Ovary (tissue), 10 donors: ENCODE measurements at regions of chr15 and their contacts with region 1.

Region 1: GRCh38 chr15:31300208-31300661 is 26.4 kb upstream of the KLF13 start:
- DNase-seq: peak in 1 of 5 donors; percentile 24
- H3K4me3 ChIP-seq: no peak overlapping the region
- H3K27ac ChIP-seq: no peak overlapping the region
- H3K4me1 ChIP-seq: peaks cover 1% of the 10 kb centered on the region
- H3K27me3 ChIP-seq: no peaks in the 10 kb centered on the region
- CTCF ChIP-seq: no peak
- EP300 ChIP-seq: no peak
- POLR2A ChIP-seq: no peak

Region 2: GRCh38 chr15:31261266-31262142 is 38.7 kb before region 1 on chr15:
- intact Hi-C with region 1: loop called in 1 of 4 experiments (anchors 1 kb)
- DNase-seq: peak in 1 of 5 donors; percentile 37
- H3K4me3 ChIP-seq: no peak overlapping the region
- H3K27ac ChIP-seq: no peak overlapping the region
- H3K4me1 ChIP-seq: no peaks in the 10 kb centered on the region
- H3K27me3 ChIP-seq: no peaks in the 10 kb centered on the region
- CTCF ChIP-seq: no peak
- EP300 ChIP-seq: no peak
- POLR2A ChIP-seq: no peak